ENCODE measurements at regions of chr19 and their contacts with region 1.

Region 1: DNA sequence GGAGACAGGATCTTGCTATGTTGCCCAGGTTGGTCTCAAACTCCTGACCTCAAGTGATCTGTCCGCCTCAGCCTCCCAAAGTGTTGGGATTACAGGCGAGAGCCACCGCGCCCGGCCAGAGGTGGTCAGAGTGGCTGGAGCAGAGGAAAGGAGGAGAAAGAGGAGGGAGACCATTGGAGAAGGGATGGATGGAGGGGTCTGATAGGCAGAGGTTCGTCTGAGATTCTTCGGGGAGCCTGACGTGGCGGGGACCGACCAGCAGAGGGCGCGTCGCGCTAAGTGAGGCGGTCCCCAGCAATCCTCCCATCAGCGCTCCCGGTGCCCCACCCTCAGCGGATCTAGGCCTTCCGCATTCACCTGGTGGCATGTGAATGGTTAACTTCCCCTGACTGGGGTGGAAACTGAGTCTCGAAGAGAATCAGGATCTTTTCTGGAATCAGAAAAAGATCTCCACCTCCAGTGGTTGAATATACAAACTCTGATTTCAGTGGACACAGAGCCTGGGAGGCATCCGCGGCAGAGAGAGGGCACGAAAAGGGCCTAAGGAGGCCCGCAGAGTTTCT is 8.8 kb downstream of the GTPBP3 start:
- DNase-seq: peak; percentile 81
- H3K4me3 Mint-ChIP-seq: no peak overlapping the region
- H3K27ac Mint-ChIP-seq: no peak overlapping the region
- H3K4me1 Mint-ChIP-seq: no peaks in the 10 kb centered on the region
- H3K27me3 Mint-ChIP-seq: peaks cover 22% of the 10 kb centered on the region
- CTCF ChIP-seq: peak; percentile 76

Region 2: GRCh38 chr19:17376935-17377600 is 30.9 kb after region 1 on chr19 and contains the start of gene PLVAP:
- CTCF ChIA-PET with region 1: interaction called, 11 read pairs
- intact Hi-C with region 1: no loop called
- DNase-seq: no peak
- H3K4me3 Mint-ChIP-seq: no peak within 1 kb of the TSS
- H3K27ac Mint-ChIP-seq: no peak within 1 kb of the TSS
- H3K4me1 Mint-ChIP-seq: no peaks in the 10 kb centered on the region
- H3K27me3 Mint-ChIP-seq: no peaks in the 10 kb centered on the region
- CTCF ChIP-seq: no peak
- total RNA-seq, gene PLVAP: not detected in 2 replicates

Measured in Calu3 (cell line).